ENCODE measurements at regions of chr10 and their contacts with region 1.

Region 1: GRCh38 chr10:92689663-92690210 is at the start of gene HHEX:
- DNase-seq: peak; percentile 80
- H3K4me3 ChIP-seq: peak within 1 kb of the TSS; percentile 54 to 98 (median 91)
- H3K27ac ChIP-seq: peak within 1 kb of the TSS; percentile 92
- H3K4me1 ChIP-seq: peaks cover 31% of the 10 kb centered on the region
- H3K27me3 ChIP-seq: no peaks in the 10 kb centered on the region
- CTCF ChIP-seq: no peak
- POLR2A ChIP-seq: peak; percentile 98
- total RNA-seq, gene HHEX: 109 and 110 TPM in 2 replicates

Region 2: GRCh38 chr10:92573798-92574547 is 115.8 kb before region 1 on chr10 and contains the start of gene IDE:
- CTCF ChIA-PET with region 1: interaction called, 12 read pairs
- POLR2A ChIA-PET with region 1: interaction called, 3 read pairs
- dilution Hi-C with region 1: no loop called
- intact Hi-C with region 1: loop called (anchors 1 kb)
- DNase-seq: peak; percentile 92
- H3K4me3 ChIP-seq: peak within 1 kb of the TSS; percentile 63 to 84 (median 68)
- H3K27ac ChIP-seq: peak within 1 kb of the TSS; percentile 89
- H3K4me1 ChIP-seq: peaks cover 18% of the 10 kb centered on the region
- H3K27me3 ChIP-seq: no peaks in the 10 kb centered on the region
- CTCF ChIP-seq: peak; percentile 83 to 87
- POLR2A ChIP-seq: peak; percentile 84
- total RNA-seq, gene IDE: 52.6 and 53.5 TPM in 2 replicates

Region 3: GRCh38 chr10:92757066-92757710 is 67.5 kb after region 1 on chr10:
- CTCF ChIA-PET with region 1: interaction called, 28 read pairs
- POLR2A ChIA-PET with region 1: interaction called, 12 read pairs
- dilution Hi-C with region 1: no loop called
- intact Hi-C with region 1: loop called (anchors 1 kb)
- DNase-seq: peak; percentile 93
- H3K4me3 ChIP-seq: peak overlapping the region in 1 of 3 experiments; percentile 41
- H3K27ac ChIP-seq: peak overlapping the region; percentile 98
- H3K4me1 ChIP-seq: peaks cover 46% of the 10 kb centered on the region
- H3K27me3 ChIP-seq: no peaks in the 10 kb centered on the region
- CTCF ChIP-seq: peak in 1 of 2 donors; percentile 18
- POLR2A ChIP-seq: no peak

Region 4: GRCh38 chr10:92822060-92822634 is 132.4 kb after region 1 on chr10:
- CTCF ChIA-PET with region 1: interaction called, 61 read pairs
- POLR2A ChIA-PET with region 1: interaction called, 24 read pairs
- dilution Hi-C with region 1: no loop called
- intact Hi-C with region 1: loop called (anchors 1 kb)
- DNase-seq: peak; percentile 97
- H3K4me3 ChIP-seq: no peak overlapping the region
- H3K27ac ChIP-seq: peak overlapping the region; percentile 97
- H3K4me1 ChIP-seq: peaks cover 55% of the 10 kb centered on the region
- H3K27me3 ChIP-seq: no peaks in the 10 kb centered on the region
- CTCF ChIP-seq: no peak
- POLR2A ChIP-seq: peak; percentile 60

Region 5: DNA sequence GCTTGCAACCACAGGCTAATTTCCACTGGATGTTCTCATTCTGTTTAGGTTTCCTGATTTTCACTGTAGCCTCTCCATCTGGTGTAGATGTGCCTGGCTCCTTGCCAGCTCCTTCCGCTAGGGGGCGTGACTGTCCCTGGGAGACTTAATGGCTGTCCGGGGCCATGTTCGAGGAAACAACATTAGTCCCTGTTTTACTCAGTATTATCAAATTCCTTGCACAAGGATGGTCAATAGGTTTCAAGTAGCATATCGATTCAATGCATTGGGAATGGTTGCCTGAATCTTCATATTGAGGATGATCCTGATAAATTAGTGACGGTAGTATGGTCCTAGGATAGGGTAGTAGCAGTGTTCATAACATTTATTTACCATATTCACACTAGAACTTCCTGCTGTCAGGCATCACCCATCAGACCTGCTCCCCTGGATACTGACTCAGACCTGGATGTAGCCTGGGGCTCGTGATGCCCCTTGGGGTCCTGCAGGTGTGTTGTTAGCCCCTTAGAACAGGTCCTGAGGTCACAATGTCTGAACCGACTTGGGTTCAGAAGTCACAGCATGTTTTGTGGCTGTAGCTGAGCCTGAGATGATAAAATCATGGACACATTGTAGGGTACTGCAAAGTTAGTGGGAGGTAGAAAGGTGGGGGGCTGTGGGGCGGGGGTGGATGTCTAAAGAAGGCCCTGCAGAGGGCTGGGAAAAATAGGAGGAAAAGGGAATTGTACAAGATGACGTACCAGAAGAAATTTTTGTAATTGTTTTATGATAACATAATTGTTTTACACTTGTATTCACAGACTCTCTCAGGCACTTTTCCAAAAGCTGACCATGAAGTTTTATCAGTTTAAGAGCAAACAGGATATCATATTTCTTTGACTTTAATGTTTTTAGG is 149.7 kb after region 1 on chr10:
- CTCF ChIA-PET with region 1: interaction called, 28 read pairs
- POLR2A ChIA-PET with region 1: interaction called, 9 read pairs
- dilution Hi-C with region 1: no loop called
- intact Hi-C with region 1: loop called (anchors 1 kb)
- DNase-seq: peak; percentile 97
- H3K4me3 ChIP-seq: peak overlapping the region in 1 of 3 experiments; percentile 2
- H3K27ac ChIP-seq: peak overlapping the region; percentile 97
- H3K4me1 ChIP-seq: peaks cover 76% of the 10 kb centered on the region
- H3K27me3 ChIP-seq: no peaks in the 10 kb centered on the region
- CTCF ChIP-seq: peak; percentile 26 to 31
- POLR2A ChIP-seq: no peak

Region 6: DNA sequence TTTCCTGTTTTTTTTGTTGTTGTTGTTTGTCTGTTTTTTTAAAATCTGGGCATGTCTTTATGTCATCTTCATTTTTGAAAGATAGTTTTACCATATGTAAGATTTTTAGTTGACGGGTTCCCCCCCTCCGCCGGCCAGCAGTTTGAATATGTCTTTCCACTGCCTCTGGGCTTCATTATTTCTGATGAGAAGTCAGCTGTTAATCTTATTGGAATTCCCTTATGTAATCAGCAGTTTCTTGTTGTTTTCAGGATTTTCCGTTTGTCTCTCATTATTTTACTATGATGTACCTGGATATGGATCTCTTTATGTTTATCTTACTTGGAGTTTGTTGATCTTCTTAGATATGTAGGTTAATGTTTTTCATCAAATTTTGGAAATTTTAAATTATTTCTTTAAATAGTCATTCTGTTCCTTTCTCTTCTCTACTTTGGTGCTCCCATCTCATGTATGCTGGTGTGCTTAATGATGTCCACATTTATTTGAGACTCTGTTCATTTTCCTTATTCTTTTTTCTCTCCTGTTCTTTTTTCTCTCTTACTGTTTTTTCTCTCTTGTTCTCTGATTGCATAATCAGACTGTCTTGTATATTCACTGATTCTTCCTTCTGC is 168.3 kb after region 1 on chr10:
- CTCF ChIA-PET with region 1: no interaction called
- POLR2A ChIA-PET with region 1: no interaction called
- dilution Hi-C with region 1: no loop called
- intact Hi-C with region 1: no loop called
- DNase-seq: no peak
- H3K4me3 ChIP-seq: no peak overlapping the region
- H3K27ac ChIP-seq: no peak overlapping the region
- H3K4me1 ChIP-seq: no peaks in the 10 kb centered on the region
- H3K27me3 ChIP-seq: no peaks in the 10 kb centered on the region
- CTCF ChIP-seq: no peak
- POLR2A ChIP-seq: no peak

Region 7: GRCh38 chr10:92873029-92873428 is 183.3 kb after region 1 on chr10:
- CTCF ChIA-PET with region 1: interaction called, 6 read pairs
- POLR2A ChIA-PET with region 1: no interaction called
- dilution Hi-C with region 1: no loop called
- intact Hi-C with region 1: loop called (anchors 2 kb)
- DNase-seq: peak; percentile 92
- H3K4me3 ChIP-seq: peak overlapping the region in 1 of 3 experiments; percentile 40
- H3K27ac ChIP-seq: peak overlapping the region; percentile 72
- H3K4me1 ChIP-seq: peaks cover 68% of the 10 kb centered on the region
- H3K27me3 ChIP-seq: no peaks in the 10 kb centered on the region
- CTCF ChIP-seq: no peak
- POLR2A ChIP-seq: peak; percentile 62

Measured in endothelial cell of umbilical vein (primary cell).